Psoas muscle (tissue), 8 donors: ENCODE measurements at regions of chr3 and their contacts with region 1.

Region 1: DNA sequence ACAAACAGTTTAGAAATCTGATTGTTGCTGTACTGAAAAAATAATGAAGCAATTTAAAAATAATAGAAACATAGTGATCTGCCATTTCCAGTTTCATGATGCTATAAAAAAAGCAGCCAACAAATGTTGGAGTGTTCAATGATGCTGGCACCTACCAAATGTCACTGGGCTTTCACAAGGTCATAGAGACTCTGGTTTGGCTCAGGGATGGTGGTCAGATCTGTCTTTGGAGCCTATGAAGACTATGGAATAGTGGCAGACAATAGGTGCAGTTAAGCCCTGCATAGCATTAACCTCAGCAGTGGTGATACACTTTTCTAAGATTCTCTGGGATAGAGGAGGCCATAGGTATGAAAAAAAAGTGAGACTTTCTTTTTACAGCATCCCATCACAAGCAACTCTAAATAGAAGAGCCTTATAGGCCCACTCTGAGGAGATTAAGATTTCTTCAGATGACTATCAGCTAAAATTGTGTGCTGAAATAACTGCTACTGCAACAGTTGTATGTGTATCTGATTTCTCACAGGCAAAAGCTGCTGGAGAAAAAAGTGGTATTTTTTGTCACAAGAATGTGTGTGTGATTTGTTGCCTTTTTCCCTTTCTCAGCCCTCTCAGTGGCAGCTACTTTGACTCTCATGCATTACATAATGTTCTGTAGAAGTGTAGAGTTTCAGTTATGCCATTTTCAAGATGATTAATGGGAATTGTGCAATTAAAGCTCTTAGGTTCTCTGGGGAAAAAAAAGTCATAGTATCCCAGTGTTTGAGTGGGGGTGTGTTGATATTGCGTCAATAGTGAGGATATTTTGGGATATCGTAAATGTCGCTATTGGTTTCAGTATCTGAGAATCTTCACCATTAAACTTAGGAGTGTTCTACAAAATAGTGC is 137.4 kb downstream of the MBNL1 start:
- DNase-seq: no peak
- ATAC-seq: peak; percentile 55 to 67 (median 64)
- H3K4me3 ChIP-seq: peak overlapping the region; percentile 55
- H3K27ac ChIP-seq: peak overlapping the region; percentile 92
- H3K4me1 ChIP-seq: peaks cover 78% of the 10 kb centered on the region
- H3K27me3 ChIP-seq: no peaks in the 10 kb centered on the region
- CTCF ChIP-seq: no peak

Region 2: DNA sequence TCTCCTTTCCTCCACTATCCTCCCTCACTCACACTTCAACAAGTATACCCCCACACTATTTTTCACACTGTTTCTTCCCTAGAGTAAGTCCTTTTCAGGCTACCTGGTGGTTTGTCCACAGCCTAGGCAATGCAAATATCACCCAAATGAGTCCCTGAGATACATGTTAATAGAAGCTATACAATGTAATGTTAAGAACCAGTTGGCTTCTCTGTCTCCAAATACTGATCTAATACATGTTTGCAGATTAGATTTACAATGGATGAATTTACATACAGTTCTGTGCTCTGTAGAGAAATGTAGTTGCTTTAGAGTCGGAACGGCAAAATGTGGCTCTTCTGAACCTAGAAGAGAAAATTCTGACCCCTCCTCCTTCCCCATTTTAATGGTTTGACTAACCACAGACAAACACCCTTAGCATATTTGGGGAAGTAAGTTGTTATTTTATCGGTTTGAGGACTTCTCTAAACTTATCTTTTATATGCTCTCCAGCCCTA is 201.0 kb before region 1 on chr3:
- intact Hi-C with region 1: no loop called
- DNase-seq: no peak
- ATAC-seq: peak in 2 of 4 donors; percentile 23 to 28
- H3K4me3 ChIP-seq: peak overlapping the region; percentile 61
- H3K27ac ChIP-seq: peak overlapping the region; percentile 86
- H3K4me1 ChIP-seq: peaks cover 28% of the 10 kb centered on the region
- H3K27me3 ChIP-seq: no peaks in the 10 kb centered on the region
- CTCF ChIP-seq: no peak

Region 3: GRCh38 chr3:152241142-152242017 is 164.8 kb before region 1 on chr3:
- intact Hi-C with region 1: no loop called
- DNase-seq: no peak
- ATAC-seq: peak in 3 of 4 donors; percentile 53 to 86 (median 67)
- H3K4me3 ChIP-seq: no peak overlapping the region
- H3K27ac ChIP-seq: peak overlapping the region; percentile 69
- H3K4me1 ChIP-seq: peaks cover 21% of the 10 kb centered on the region
- H3K27me3 ChIP-seq: no peaks in the 10 kb centered on the region
- CTCF ChIP-seq: no peak

Region 4: DNA sequence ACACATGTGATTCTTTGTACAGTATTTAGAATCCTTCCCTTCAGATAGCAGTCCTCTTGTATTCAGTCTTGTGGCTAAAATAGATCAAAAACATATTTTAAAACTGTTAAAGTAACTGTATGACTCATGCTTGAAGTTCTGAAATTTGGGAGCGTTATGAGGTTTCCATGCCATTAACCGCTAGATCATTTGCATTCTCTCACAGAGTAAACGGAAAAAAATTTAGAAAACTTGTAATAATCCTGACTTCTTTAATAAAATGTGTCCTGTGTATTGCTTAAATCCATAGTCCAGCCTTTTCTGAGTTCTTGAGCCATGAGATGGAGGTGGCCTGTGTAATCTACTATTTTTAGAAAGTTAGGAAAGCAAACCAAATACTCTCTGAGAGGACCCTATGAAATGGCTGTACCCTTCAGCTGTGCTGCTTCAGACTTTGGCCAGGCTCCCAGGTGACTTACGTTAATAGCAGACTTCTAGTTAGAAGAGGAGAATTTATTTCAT is 103.6 kb before region 1 on chr3:
- intact Hi-C with region 1: loop called in 1 of 2 experiments (anchors 5 kb)
- DNase-seq: peak; percentile 40 to 70
- ATAC-seq: peak; percentile 70 to 82 (median 76)
- H3K4me3 ChIP-seq: peak overlapping the region; percentile 70
- H3K27ac ChIP-seq: peak overlapping the region; percentile 94
- H3K4me1 ChIP-seq: peaks cover 54% of the 10 kb centered on the region
- H3K27me3 ChIP-seq: no peaks in the 10 kb centered on the region
- CTCF ChIP-seq: no peak

Region 5: DNA sequence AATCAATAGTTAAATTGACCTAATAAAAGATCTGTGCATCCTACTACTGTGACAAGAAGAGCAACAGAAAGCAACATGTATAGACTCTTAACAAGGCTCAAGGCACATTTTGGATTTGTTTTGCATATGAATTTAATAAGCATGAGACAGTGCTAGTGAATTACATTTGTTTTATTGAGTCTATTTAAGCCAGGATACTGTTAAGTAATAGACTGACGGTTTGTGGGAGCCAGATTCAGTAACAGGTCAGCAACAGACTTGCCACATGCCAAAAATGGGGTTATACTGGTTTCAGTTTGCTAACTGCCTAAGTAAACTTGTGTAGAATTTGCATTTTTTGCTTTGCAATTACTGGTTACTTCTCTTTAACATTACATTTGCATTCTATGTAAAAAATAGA is 83.4 kb before region 1 on chr3:
- intact Hi-C with region 1: loop called in 1 of 2 experiments (anchors 5 kb)
- DNase-seq: no peak
- ATAC-seq: peak; percentile 27 to 62 (median 42)
- H3K4me3 ChIP-seq: peak overlapping the region; percentile 44
- H3K27ac ChIP-seq: peak overlapping the region; percentile 78
- H3K4me1 ChIP-seq: peaks cover 82% of the 10 kb centered on the region
- H3K27me3 ChIP-seq: no peaks in the 10 kb centered on the region
- CTCF ChIP-seq: no peak

Region 6: GRCh38 chr3:152382312-152383135 is 23.6 kb before region 1 on chr3:
- intact Hi-C with region 1: loop called in 1 of 2 experiments (anchors 2 kb)
- DNase-seq: no peak
- ATAC-seq: peak in 3 of 4 donors; percentile 11 to 18 (median 17)
- H3K4me3 ChIP-seq: peak overlapping the region; percentile 61
- H3K27ac ChIP-seq: peak overlapping the region; percentile 82
- H3K4me1 ChIP-seq: peaks cover 78% of the 10 kb centered on the region
- H3K27me3 ChIP-seq: no peaks in the 10 kb centered on the region
- CTCF ChIP-seq: no peak